ENCODE measurements at regions of chr10 and their contacts with region 1.

Region 1: GRCh38 chr10:49369216-49370162 is 26.4 kb downstream of the DRGX start:
- DNase-seq: no peak
- H3K4me3 ChIP-seq: no peak overlapping the region
- H3K27ac ChIP-seq: no peak overlapping the region
- H3K4me1 ChIP-seq: no peaks in the 10 kb centered on the region
- H3K27me3 ChIP-seq: peaks cover 0 to 6% of the 10 kb centered on the region in 2 donors
- CTCF ChIP-seq: no peak
- POLR2A ChIP-seq: no peak

Region 2: DNA sequence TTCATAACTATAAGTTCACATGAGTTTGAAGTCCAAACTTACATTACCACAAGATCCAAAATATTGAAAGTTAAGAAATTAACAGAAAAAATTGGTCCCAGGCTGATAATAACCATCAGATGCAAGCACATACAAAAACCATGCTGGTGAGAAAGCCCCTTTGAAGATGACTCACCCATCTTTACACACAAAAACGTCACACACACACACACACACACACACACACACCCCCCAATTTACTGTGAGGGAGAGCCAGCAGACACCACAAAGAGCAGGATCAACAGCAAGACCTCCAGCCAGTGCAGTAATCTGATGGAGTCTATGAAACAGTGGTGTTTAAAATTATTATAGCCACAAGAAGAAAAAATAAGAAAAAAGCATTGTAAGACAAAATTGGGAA is 76.5 kb after region 1 on chr10:
- intact Hi-C with region 1: no loop called
- DNase-seq: no peak
- H3K4me3 ChIP-seq: no peak overlapping the region
- H3K27ac ChIP-seq: no peak overlapping the region
- H3K4me1 ChIP-seq: no peaks in the 10 kb centered on the region
- H3K27me3 ChIP-seq: no peaks in the 10 kb centered on the region
- CTCF ChIP-seq: no peak
- POLR2A ChIP-seq: no peak

Region 3: GRCh38 chr10:49484486-49485235 is 115.2 kb after region 1 on chr10:
- intact Hi-C with region 1: loop called (anchors 2 kb)
- DNase-seq: no peak
- H3K4me3 ChIP-seq: no peak overlapping the region
- H3K27ac ChIP-seq: no peak overlapping the region
- H3K4me1 ChIP-seq: no peaks in the 10 kb centered on the region
- H3K27me3 ChIP-seq: no peaks in the 10 kb centered on the region
- CTCF ChIP-seq: no peak
- POLR2A ChIP-seq: no peak